ENCODE measurements at regions of chr1 and their contacts with region 1.

Region 1: DNA sequence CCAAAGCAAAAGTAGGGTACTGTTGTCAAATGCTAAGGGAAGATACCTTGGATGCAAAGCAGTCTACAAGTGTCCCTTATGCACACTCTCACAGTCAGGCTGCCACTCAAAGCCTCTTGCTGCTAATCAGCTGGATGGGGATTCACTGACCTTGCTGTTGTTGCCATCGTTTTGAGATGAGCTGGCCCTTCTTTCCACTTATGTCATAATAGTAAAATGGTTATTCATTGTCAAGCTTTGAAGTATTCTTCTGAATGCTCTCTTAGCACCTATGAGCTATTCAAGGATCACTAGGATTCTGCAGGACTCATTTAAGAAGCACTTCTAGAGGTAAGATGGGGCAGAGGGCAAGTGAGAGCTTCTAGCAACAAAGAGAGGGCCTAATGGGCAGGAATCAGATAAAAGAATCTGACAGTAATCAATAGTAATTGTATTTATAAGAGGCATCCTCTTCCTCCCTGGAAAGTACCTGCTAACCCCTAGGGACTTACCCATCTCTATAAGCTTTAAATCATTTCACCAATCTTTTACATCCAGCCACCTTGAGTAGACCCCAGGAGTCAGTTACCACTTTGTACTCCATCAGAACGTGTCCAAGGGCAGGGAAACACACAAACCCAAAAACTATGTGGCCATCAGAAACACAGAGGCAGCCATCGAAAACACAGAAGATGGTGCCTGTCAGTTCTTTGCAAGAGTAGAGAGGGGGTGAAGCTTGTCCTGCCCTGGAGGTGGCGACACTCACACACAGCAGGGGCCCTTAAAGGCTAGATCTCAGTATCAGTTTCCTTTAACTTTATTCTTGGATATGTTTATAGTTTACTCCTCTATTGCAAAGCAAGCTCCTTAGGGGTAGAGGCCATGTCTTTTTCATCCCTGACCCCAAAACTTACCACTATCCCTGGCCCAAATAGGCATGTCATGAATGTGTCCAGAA is 103.7 kb upstream of the NFIA start:
- DNase-seq: no peak

Region 2: DNA sequence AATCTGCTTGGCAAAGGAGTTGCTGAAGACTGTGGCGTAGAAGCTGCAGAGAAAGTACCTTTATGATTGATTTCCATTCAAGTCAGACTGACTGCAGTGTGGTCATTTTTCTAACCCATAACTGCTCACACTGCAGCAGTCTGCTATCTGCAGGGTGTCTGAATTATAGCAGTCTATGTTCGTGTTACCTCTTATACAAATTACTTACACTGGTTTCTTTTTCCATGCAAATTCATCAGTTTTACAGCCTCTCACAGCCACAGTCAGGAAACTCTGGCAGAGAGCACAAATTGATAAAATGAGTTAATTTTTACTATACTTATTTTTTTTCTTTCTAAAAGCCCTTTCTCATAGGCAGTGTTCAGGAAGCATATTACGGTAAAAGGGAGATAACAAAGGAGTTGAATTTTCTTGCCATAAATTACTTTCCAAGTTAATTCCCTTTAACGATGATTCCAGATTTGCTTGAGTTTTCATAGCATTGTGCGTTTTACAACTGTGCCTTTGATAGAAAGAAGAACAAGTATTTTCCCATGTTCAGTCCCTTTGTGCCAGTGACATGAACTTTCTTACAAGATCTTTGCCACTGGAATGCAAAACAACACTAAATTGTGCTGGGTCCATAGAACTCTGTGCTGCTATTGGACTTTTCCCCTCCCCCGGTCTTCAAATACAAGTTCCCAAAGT is 365.2 kb after region 1 on chr1:
- intact Hi-C with region 1: loop called (anchors 10 kb)
- DNase-seq: no peak